Heart left ventricle (tissue), 16 donors: ENCODE measurements at regions of chr18 and their contacts with region 1.

Region 1: DNA sequence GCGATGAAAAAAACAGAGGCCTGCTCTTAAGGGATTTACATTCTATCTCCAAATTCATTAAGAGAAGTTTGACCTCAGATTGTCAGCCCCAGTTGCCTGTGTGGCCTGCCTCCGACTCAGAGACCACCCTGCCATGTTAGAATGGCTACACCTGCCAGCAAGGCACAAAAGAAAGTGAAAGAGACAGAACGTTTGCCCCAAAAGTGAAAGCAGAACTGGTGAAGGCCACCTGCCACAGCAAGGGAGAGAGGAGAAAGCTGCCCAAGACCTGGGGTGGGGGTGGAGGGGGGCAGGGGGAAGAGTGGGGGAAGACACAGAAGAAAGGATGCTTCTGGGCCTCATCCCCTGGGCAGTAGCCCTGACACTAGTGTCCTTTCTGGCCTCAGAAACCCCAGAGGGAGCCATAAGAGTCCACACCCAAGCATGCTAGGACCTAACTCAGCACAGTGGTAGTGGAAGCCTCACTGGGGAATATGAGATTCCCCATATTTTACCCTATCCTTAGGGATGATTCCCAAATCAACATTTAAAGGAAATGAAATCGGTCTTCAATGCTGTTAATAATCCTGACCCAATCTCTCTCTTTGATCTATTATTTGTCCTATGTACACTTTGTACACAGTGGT is 389.7 kb downstream of the TXNL1 start:
- DNase-seq: no peak
- ATAC-seq: no peak
- H3K4me3 ChIP-seq: no peak overlapping the region
- H3K27ac ChIP-seq: no peak overlapping the region
- H3K4me1 ChIP-seq: peaks cover 0 to 17% (median 1%) of the 10 kb centered on the region in 12 donors
- H3K27me3 ChIP-seq: no peaks in the 10 kb centered on the region
- CTCF ChIP-seq: no peak
- POLR2A ChIP-seq: no peak

Region 2: GRCh38 chr18:55830544-55830943 is 418.2 kb before region 1 on chr18:
- intact Hi-C with region 1: no loop called
- DNase-seq: no peak
- ATAC-seq: no peak
- H3K4me3 ChIP-seq: no peak overlapping the region
- H3K27ac ChIP-seq: no peak overlapping the region
- H3K4me1 ChIP-seq: no peaks in the 10 kb centered on the region
- H3K27me3 ChIP-seq: no peaks in the 10 kb centered on the region
- CTCF ChIP-seq: no peak
- POLR2A ChIP-seq: no peak

Region 3: GRCh38 chr18:56124186-56124585 is 124.5 kb before region 1 on chr18:
- intact Hi-C with region 1: no loop called
- DNase-seq: no peak
- ATAC-seq: peak in 1 of 4 donors; percentile 71
- H3K4me3 ChIP-seq: no peak overlapping the region
- H3K27ac ChIP-seq: no peak overlapping the region
- H3K4me1 ChIP-seq: peaks cover 0 to 16% (median 0%) of the 10 kb centered on the region in 12 donors
- H3K27me3 ChIP-seq: no peaks in the 10 kb centered on the region
- CTCF ChIP-seq: no peak
- POLR2A ChIP-seq: no peak

Region 4: DNA sequence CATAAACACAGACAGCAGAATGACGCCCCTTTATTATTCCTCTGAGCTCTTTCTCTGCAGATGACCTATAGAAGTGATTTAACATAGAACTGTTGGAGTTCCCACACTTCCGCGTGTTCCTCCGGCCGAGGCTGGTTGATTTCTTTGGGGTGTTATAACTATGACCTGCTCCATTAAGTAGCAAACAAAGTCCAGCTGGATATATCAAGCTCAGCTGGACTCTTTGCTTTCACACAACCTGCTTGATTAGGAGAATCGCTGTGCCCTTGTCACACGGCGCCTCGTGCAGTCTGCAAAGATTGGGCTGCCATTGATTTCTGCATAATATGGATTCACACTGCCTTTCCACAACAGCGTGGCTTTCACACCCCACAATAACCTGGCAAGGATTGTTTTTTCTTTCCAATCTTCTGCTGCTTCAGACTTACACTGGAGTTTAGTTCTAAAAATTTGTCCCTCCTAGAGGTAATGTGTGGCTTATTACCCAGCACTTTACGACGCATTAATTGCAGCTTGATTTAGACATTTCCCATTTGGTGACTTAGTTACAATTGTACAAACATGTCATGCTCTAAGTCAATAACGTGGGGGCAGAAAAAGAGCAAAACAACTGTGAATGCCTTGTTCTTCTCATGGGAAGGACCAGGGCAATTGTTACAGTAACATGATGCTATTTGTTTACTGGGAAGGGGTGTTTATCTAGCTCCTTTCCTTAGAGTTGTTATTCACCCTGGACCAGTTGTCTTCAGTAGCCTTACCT is 96.0 kb before region 1 on chr18:
- intact Hi-C with region 1: no loop called
- DNase-seq: no peak
- ATAC-seq: no peak
- H3K4me3 ChIP-seq: no peak overlapping the region
- H3K27ac ChIP-seq: no peak overlapping the region
- H3K4me1 ChIP-seq: no peaks in the 10 kb centered on the region
- H3K27me3 ChIP-seq: no peaks in the 10 kb centered on the region
- CTCF ChIP-seq: no peak
- POLR2A ChIP-seq: no peak

Region 5: GRCh38 chr18:56563568-56563967 is 314.8 kb after region 1 on chr18:
- intact Hi-C with region 1: loop called in 1 of 10 experiments (anchors 10 kb)
- DNase-seq: no peak
- ATAC-seq: peak in 2 of 4 donors; percentile 38 to 56
- H3K4me3 ChIP-seq: no peak overlapping the region
- H3K27ac ChIP-seq: no peak overlapping the region
- H3K4me1 ChIP-seq: peaks cover 0 to 27% (median under 1%) of the 10 kb centered on the region in 12 donors
- H3K27me3 ChIP-seq: no peaks in the 10 kb centered on the region
- CTCF ChIP-seq: peak in 1 of 12 donors; percentile 10
- POLR2A ChIP-seq: no peak